ENCODE measurements at regions of chr14 and their contacts with region 1.

Region 1: DNA sequence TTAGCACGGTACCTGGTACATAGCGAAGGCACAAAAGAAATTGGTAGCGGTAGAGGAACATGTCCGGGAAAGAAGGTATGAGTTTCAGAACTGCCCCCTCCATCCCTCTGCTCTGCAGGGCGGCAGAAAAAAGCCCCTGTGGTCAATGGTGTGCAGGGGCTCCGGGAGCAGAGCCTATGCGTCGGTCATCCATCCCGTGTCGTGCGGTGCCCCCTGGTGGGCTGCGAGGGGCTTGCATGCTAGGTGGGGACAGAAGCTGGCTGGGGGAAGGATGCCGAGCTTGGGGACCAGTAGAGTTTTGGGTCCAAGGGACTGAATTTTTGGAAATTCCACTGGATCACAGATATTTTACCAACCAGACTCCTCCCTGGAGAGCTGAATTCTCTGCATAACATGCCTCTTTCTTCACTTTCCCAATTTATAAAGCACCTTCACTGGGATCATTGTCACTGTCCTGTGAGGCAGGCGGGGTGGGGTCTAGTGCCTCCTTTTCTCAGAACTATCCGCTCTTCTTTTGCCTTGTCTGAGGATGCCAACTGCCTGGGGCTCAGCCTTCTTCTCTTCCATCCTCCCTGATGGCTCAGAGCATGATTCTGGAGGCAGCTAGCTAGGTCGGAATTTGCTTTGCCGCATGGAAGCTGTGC is 148.7 kb downstream of the SMOC1 start:
- DNase-seq: no peak
- H3K4me3 ChIP-seq: no peak overlapping the region
- H3K27ac ChIP-seq: no peak overlapping the region
- H3K4me1 ChIP-seq: peaks cover 17% of the 10 kb centered on the region
- H3K27me3 ChIP-seq: no peaks in the 10 kb centered on the region
- CTCF ChIP-seq: peak; percentile 88 to 97

Region 2: DNA sequence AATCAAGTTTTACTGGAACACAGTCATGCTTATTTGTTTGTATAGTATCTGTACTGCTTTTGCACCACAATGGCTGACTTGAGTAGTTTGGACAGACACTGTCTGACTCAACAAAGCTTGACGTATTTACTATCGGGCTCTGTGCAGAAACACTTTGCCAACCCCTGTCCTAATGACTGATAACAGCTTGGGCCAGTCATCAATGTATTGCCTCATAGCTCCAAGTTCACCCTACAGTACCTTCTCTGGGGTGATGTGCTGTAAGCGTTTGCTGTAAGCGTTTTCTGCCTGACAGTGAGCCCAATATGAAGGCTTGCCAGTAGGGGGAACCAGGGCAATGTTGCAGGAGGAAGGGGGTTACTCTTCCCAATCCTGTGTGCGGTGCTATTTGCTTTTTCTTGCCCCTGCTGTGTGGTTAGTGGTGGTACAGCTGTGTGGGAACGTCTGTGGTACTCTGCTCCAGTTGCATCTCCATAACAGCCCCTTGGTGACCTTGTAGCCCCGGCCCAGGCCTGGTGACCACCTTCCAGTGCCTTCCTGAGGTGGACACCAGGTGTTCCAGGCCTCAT is 447.8 kb before region 1 on chr14:
- CTCF ChIA-PET with region 1: no interaction called
- dilution Hi-C with region 1: loop called (anchors 25 kb)
- in situ Hi-C with region 1: no loop called
- intact Hi-C with region 1: no loop called
- DNase-seq: peak; percentile 83
- H3K4me3 ChIP-seq: no peak overlapping the region
- H3K27ac ChIP-seq: no peak overlapping the region
- H3K4me1 ChIP-seq: no peaks in the 10 kb centered on the region
- H3K27me3 ChIP-seq: no peaks in the 10 kb centered on the region
- CTCF ChIP-seq: peak; percentile 24 to 47

Region 3: DNA sequence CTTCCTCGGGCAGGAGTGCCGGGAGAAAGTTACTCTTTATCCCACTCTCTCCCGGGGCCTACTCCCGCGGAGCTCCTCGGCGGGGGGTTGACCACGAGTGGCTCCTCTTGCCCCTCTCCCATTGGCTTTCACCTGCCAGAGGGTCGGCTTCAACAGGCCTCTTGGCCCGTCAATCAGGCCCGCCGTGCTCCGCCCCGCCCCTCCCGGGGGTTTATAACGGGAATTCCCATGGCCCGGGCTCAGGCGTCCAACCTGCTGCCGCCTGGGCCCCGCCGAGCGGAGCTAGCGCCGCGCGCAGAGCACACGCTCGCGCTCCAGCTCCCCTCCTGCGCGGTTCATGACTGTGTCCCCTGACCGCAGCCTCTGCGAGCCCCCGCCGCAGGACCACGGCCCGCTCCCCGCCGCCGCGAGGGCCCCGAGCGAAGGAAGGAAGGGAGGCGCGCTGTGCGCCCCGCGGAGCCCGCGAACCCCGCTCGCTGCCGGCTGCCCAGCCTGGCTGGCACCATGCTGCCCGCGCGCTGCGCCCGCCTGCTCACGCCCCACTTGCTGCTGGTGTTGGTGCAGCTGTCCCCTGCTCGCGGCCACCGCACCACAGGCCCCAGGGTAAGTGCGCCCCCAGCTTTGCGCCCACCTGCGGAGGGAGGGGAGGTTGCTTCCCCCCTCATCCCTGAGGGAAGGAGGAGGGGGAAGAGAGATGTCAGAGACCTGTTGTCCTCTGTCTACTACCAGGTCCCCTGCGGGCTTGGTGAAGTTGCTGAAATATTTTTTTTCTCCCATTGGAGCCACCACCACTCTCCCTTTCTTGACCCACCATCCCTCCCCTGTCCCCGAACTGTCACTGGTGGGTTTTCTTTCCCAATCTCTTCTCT is 148.5 kb before region 1 on chr14 and contains the start of gene SMOC1:
- CTCF ChIA-PET with region 1: interaction called, 9 read pairs
- dilution Hi-C with region 1: no loop called
- in situ Hi-C with region 1: no loop called
- intact Hi-C with region 1: loop called (anchors 1 kb)
- DNase-seq: peak; percentile 85
- H3K4me3 ChIP-seq: peak within 1 kb of the TSS in 2 of 3 experiments; percentile 49 to 50
- H3K27ac ChIP-seq: no peak within 1 kb of the TSS
- H3K4me1 ChIP-seq: peaks cover 5% of the 10 kb centered on the region
- H3K27me3 ChIP-seq: no peaks in the 10 kb centered on the region
- CTCF ChIP-seq: no peak
- total RNA-seq, gene SMOC1: 22.3 to 44.9 TPM

Region 4: DNA sequence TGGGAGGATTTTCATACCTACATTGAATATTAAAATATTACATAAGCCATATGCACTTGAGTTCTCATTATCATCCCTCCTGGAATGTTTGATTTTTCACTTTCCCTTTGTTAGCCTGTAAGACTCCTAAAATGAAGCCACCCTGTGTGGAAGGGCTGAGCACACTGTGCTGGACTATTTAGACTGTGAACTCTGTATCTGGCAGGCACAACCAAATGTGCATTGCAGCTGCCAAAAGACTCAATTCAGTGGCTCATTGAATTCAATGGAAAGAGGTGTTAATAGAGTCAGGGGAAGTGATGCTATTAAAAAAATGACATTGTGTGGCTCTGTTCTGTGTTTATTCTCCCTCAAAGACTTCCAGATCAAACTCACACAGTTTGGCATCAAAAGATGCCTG is 37.6 kb before region 1 on chr14:
- CTCF ChIA-PET with region 1: no interaction called
- dilution Hi-C with region 1: loop called (anchors 5 kb)
- in situ Hi-C with region 1: no loop called
- intact Hi-C with region 1: no loop called
- DNase-seq: no peak
- H3K4me3 ChIP-seq: no peak overlapping the region
- H3K27ac ChIP-seq: no peak overlapping the region
- H3K4me1 ChIP-seq: peaks cover 9% of the 10 kb centered on the region
- H3K27me3 ChIP-seq: no peaks in the 10 kb centered on the region
- CTCF ChIP-seq: no peak

Region 5: GRCh38 chr14:70013269-70013873 is 14.5 kb before region 1 on chr14:
- CTCF ChIA-PET with region 1: no interaction called
- dilution Hi-C with region 1: no loop called
- in situ Hi-C with region 1: no loop called
- intact Hi-C with region 1: no loop called
- DNase-seq: peak; percentile 37
- H3K4me3 ChIP-seq: no peak overlapping the region
- H3K27ac ChIP-seq: no peak overlapping the region
- H3K4me1 ChIP-seq: peaks cover 38% of the 10 kb centered on the region
- H3K27me3 ChIP-seq: no peaks in the 10 kb centered on the region
- CTCF ChIP-seq: peak; percentile 84 to 90

Measured in mammary epithelial cell (primary cell).